ENCODE measurements at regions of chr14 and their contacts with region 1.

Region 1: GRCh38 chr14:65333943-65334687 is 78.4 kb upstream of the FUT8 start:
- H3K4me3 Mint-ChIP-seq: no peak overlapping the region
- H3K27ac Mint-ChIP-seq: no peak overlapping the region
- H3K4me1 Mint-ChIP-seq: peaks cover 35% of the 10 kb centered on the region
- H3K27me3 Mint-ChIP-seq: peaks cover 75% of the 10 kb centered on the region

Region 2: GRCh38 chr14:65206448-65207096 is 127.5 kb before region 1 on chr14:
- intact Hi-C with region 1: loop called (anchors 1 kb)
- H3K4me3 Mint-ChIP-seq: no peak overlapping the region
- H3K27ac Mint-ChIP-seq: peak overlapping the region; percentile 87
- H3K4me1 Mint-ChIP-seq: peaks cover 63% of the 10 kb centered on the region
- H3K27me3 Mint-ChIP-seq: peaks cover 9% of the 10 kb centered on the region

Region 3: DNA sequence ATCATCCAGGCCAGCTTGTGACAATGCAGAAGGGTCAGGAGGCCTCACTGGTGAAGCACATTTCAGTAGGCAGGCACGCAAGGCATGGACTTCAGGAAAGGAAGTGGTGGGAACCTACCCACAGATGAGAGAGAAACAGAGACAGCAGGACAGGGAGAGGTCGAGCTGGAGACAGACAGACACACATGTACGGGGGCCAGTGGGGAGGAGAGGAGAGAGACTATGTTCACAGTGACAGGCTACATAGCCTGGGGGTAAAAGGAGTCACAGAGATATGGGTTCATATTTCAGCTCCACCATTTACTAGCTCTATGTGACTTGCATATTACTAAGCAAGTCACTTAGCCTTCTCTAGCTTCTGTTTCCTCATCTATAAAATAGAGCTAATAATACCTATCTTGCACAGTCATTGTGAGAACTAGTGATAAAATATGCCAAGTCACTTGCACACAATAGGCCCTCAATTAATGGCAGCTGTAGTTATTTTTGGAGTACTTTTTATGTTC is 12.7 kb before region 1 on chr14:
- intact Hi-C with region 1: no loop called
- H3K4me3 Mint-ChIP-seq: no peak overlapping the region
- H3K27ac Mint-ChIP-seq: no peak overlapping the region
- H3K4me1 Mint-ChIP-seq: peaks cover 12% of the 10 kb centered on the region
- H3K27me3 Mint-ChIP-seq: peaks cover 81% of the 10 kb centered on the region

Region 4: DNA sequence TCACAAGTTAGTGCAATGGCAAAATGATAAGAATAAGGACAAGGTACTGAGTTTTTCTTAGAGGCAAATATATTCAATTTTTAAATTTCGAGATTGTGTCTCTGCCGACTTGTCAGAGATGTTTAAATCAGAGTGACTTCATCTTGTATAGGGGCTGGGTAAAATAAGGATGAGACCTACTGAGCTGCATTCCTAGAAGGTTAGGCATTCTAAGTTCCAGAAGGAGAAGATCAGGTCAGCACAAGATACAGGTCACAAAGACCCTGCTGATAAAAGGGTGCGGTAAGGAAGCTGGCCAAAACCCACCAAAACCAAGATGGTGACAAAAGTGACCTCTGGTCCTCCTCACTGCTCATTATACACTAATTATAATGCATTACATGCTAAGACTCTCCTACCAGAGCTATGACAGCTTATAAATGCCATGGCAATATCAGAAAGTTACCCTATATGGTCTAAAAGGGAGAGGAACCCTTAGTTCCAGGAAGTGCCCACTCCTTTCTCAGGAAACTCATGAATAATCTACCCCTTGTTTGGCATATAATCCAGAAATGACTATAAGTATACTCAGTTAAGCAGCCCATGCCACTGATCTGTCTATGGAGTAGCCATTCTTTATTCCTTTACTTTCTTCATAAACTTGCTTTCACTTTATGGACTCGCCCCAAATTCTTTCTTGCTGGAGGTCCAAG is 35.3 kb after region 1 on chr14:
- intact Hi-C with region 1: loop called (anchors 5 kb)
- H3K4me3 Mint-ChIP-seq: no peak overlapping the region
- H3K27ac Mint-ChIP-seq: no peak overlapping the region
- H3K4me1 Mint-ChIP-seq: peaks cover 12% of the 10 kb centered on the region
- H3K27me3 Mint-ChIP-seq: peaks cover 34% of the 10 kb centered on the region

Measured in dendritic cell treated with granulocyte-macrophage colony-stimulating factor and Interleukin-4, amounts not matched to agents 40 ng/mL and 50 ng/mL, for 4 days (primary cell).